Activated CD4-positive, alpha-beta T cell treated with anti-CD3 and anti-CD28 coated beads for 36 hours (primary cell): ENCODE measurements at regions of chr19 and their contacts with region 1.

Region 1: DNA sequence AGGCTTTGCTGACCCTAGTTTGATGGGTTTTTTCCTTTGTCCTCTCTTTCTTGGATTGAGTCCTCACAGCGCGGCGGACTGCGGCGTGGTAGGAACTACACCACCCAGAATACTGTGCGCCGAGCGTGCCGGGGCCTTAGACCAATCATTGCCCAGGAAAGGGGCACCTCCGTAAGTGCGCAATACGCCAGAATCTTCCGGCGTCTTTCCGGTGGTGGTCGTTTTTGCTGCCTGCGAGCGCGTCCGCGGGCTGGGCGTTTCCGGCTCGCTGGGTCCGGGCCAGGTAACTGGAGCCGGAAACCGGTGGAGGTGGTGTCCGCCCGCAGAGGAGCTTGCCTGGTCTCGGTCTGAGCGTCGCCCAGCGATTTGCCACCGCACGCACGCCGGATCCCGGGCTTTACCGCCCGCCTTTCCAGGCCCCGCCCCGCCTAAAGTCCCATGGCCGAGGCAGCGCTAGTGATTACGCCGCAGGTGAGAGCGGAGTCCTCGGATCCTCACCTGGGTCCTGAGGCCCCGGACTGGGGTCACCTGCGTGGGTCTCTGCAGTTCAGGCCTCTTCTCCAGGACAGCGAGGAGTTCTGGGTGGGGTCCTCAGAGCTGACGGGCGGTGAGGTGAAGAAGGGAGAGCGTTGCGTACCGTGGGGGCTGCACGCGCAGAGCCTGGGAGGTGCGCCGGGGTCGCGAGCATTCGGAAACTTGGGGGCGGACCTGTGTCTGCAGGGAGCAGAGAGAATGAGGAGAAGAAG is at the start of gene ZNF549:
- DNase-seq: peak; percentile 93
- ATAC-seq: peak; percentile 100
- H3K4me3 Mint-ChIP-seq: peak within 1 kb of the TSS; percentile 82
- H3K27ac Mint-ChIP-seq: peak within 1 kb of the TSS; percentile 84
- H3K4me1 Mint-ChIP-seq: peaks cover 18% of the 10 kb centered on the region
- H3K27me3 Mint-ChIP-seq: no peaks in the 10 kb centered on the region
- total RNA-seq, gene ZNF549: 3.7 to 4.6 TPM

Region 2: DNA sequence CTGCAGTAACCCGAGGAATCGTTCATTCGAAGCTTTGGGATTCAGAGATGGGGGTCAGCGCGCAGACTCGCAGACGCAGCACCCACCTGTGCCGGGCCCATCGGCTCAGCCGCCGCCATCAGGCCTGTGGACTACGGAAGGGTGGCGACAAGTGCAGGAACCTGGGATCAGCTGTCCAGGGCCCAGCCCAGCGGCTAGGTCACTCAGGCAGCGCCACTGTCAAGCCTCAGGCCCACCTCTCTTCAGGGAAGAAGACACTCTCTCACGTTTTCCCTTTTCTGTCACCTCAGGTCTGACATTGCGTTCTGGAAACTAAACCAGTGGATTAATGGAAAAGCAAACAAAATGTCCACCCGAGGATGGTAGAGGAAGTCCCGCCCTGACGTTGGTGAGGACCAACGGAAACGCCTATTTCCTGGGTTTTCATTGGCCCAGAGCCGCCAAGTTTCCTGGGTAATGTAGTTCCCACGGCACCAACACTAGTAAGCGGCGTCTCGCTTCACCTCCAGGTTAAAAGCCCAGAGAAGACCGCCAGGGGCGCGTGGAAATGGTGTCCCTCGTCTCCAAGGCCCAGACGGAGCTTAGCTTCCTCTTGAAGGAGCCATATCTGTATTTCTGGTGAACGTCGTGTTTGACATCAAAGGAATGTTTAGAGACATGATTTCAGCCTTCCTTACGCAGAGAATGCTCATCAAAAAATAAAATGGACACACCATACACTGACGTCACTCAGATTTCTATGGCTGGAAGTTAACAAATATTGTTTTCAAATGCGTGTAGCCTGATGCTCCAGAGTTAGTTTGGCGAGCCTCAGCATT is 49.9 kb before region 1 on chr19 and contains the start of gene ZNF772:
- CTCF ChIA-PET with region 1: no interaction called
- POLR2A ChIA-PET with region 1: no interaction called
- intact Hi-C with region 1: loop called in 1 of 2 experiments (anchors 1 kb)
- DNase-seq: peak; percentile 92
- ATAC-seq: peak; percentile 100
- H3K4me3 Mint-ChIP-seq: peak within 1 kb of the TSS; percentile 76
- H3K27ac Mint-ChIP-seq: peak within 1 kb of the TSS; percentile 79
- H3K4me1 Mint-ChIP-seq: peaks cover 17% of the 10 kb centered on the region
- H3K27me3 Mint-ChIP-seq: no peaks in the 10 kb centered on the region
- total RNA-seq, gene ZNF772: 6.5 to 7.5 TPM

Region 3: DNA sequence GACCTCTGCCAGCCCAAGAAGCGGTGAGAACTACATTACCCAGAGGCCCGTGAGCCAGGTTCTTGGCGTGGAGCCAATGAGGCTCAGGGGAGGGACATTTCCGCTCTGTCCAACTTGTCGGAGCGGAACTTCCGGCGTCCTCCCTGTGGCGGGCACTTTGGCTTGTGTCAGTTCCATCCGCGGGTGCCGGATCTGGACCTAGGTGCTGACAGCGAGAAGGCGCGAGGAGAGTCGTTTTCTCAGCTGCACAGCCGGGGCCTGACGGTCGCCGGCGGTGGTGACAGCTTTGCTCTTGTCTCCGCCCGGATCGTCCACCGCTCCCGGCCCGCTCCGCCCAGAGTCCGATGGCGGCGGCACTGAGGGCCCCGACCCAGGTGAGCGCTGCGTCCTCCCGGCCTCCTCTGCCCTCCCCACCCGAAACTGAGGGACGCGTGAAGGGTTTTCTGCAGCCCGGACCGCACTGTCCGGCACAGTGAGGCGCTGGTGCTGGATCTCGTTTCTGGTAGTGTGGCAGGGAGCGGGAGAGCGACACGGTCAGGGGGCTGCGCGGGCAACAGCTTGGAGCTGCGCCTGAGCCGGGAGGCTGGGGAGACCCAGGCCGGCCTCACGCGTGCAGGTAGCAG is 72.6 kb after region 1 on chr19 and contains the start of gene ZNF530:
- CTCF ChIA-PET with region 1: no interaction called
- POLR2A ChIA-PET with region 1: no interaction called
- intact Hi-C with region 1: loop called in 1 of 2 experiments (anchors 1 kb)
- DNase-seq: peak; percentile 95
- ATAC-seq: peak; percentile 98
- H3K4me3 Mint-ChIP-seq: peak within 1 kb of the TSS; percentile 81
- H3K27ac Mint-ChIP-seq: peak within 1 kb of the TSS; percentile 79
- H3K4me1 Mint-ChIP-seq: peaks cover 12% of the 10 kb centered on the region
- H3K27me3 Mint-ChIP-seq: no peaks in the 10 kb centered on the region
- total RNA-seq, gene ZNF530: 7.1 to 7.2 TPM

Region 4: GRCh38 chr19:57872450-57872849 is 345.1 kb after region 1 on chr19:
- CTCF ChIA-PET with region 1: no interaction called
- POLR2A ChIA-PET with region 1: no interaction called
- intact Hi-C with region 1: no loop called
- DNase-seq: no peak
- ATAC-seq: no peak
- H3K4me3 Mint-ChIP-seq: no peak overlapping the region
- H3K27ac Mint-ChIP-seq: no peak overlapping the region
- H3K4me1 Mint-ChIP-seq: no peaks in the 10 kb centered on the region
- H3K27me3 Mint-ChIP-seq: no peaks in the 10 kb centered on the region